ENCODE measurements at regions of chr6 and their contacts with region 1.

Region 1: DNA sequence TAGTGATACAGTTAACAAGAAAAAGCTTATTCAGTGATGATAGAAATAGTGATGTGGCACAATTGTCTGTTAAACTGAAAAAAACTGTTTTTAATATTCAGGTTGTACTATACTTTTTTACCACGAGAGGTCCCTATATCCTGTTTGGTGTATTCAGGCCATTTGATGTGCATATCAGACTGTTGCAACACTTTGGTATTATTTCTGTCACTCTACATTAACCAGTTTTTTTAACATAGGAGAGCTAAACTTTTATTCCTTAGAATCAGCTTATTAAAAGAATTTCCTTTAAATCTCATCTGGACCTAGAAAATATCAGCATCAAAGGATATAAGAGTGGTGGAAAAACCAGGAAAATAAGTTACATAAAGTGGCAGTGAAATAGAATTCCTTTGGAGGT is 36.8 kb downstream of the TSPYL4 start:
- DNase-seq: no peak
- ATAC-seq: peak; percentile 82
- H3K4me3 Mint-ChIP-seq: no peak overlapping the region
- H3K27ac Mint-ChIP-seq: peak overlapping the region; percentile 57
- H3K4me1 Mint-ChIP-seq: peaks cover 6% of the 10 kb centered on the region
- H3K27me3 Mint-ChIP-seq: no peaks in the 10 kb centered on the region
- CTCF ChIP-seq: peak; percentile 60

Region 2: DNA sequence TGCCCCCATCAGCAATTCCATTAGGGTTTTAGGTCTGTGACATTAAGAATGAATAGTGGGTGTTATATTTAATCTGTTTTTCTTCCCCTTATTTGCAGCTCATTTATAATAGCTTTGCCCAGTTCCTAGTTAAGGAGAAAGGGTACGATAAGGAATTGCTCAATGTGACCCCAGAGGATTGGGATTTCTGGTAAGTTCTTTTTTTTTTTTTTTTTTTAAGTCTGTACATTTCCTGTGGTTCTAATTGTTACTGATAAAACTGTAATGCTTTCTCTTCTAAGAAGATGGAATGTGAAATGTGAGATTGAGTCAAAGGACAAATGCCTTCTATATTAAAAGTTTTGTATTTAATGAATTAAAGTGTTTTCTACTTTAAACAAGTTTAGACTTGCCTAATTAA is 110.9 kb before region 1 on chr6:
- CTCF ChIA-PET with region 1: no interaction called
- POLR2A ChIA-PET with region 1: no interaction called
- intact Hi-C with region 1: no loop called
- DNase-seq: no peak
- ATAC-seq: no peak
- H3K4me3 Mint-ChIP-seq: no peak overlapping the region
- H3K27ac Mint-ChIP-seq: no peak overlapping the region
- H3K4me1 Mint-ChIP-seq: peaks cover 46% of the 10 kb centered on the region
- H3K27me3 Mint-ChIP-seq: no peaks in the 10 kb centered on the region
- CTCF ChIP-seq: no peak

Region 3: GRCh38 chr6:116196841-116197240 is 20.2 kb before region 1 on chr6:
- CTCF ChIA-PET with region 1: no interaction called
- POLR2A ChIA-PET with region 1: no interaction called
- intact Hi-C with region 1: no loop called
- DNase-seq: no peak
- ATAC-seq: no peak
- H3K4me3 Mint-ChIP-seq: no peak overlapping the region
- H3K27ac Mint-ChIP-seq: no peak overlapping the region
- H3K4me1 Mint-ChIP-seq: peaks cover 4% of the 10 kb centered on the region
- H3K27me3 Mint-ChIP-seq: no peaks in the 10 kb centered on the region
- CTCF ChIP-seq: no peak

Region 4: GRCh38 chr6:116229287-116229913 is 12.3 kb after region 1 on chr6:
- CTCF ChIA-PET with region 1: interaction called, 19 read pairs
- POLR2A ChIA-PET with region 1: no interaction called
- intact Hi-C with region 1: no loop called
- DNase-seq: peak; percentile 26
- ATAC-seq: no peak
- H3K4me3 Mint-ChIP-seq: no peak overlapping the region
- H3K27ac Mint-ChIP-seq: no peak overlapping the region
- H3K4me1 Mint-ChIP-seq: no peaks in the 10 kb centered on the region
- H3K27me3 Mint-ChIP-seq: no peaks in the 10 kb centered on the region
- CTCF ChIP-seq: no peak

Measured in activated CD8-positive, alpha-beta T cell treated with anti-CD3 and anti-CD28 coated beads for 36 hours (primary cell).